Testis (tissue), 5 donors: ENCODE measurements at regions of chrX and their contacts with region 1.

Region 1: GRCh38 chrX:103686199-103687072 is at the start of gene MORF4L2:
- DNase-seq: peak; percentile 94
- H3K4me3 ChIP-seq: peak within 1 kb of the TSS; percentile 63 to 77
- H3K27ac ChIP-seq: peak within 1 kb of the TSS; percentile 97 to 99
- H3K4me1 ChIP-seq: no peaks in the 10 kb centered on the region
- H3K27me3 ChIP-seq: no peaks in the 10 kb centered on the region
- CTCF ChIP-seq: no peak
- POLR2A ChIP-seq: peak; percentile 60
- total RNA-seq, gene MORF4L2: 257 to 267 TPM

Region 2: GRCh38 chrX:103356130-103356798 is 330.2 kb before region 1 on chrX and contains the start of gene TCEAL9:
- intact Hi-C with region 1: loop called (anchors 10 kb)
- DNase-seq: peak; percentile 85
- H3K4me3 ChIP-seq: peak within 1 kb of the TSS; percentile 69 to 82
- H3K27ac ChIP-seq: peak within 1 kb of the TSS; percentile 95 to 97
- H3K4me1 ChIP-seq: no peaks in the 10 kb centered on the region
- H3K27me3 ChIP-seq: no peaks in the 10 kb centered on the region
- CTCF ChIP-seq: no peak
- POLR2A ChIP-seq: peak; percentile 58
- total RNA-seq, gene TCEAL9: 99.4 to 99.7 TPM

Region 3: DNA sequence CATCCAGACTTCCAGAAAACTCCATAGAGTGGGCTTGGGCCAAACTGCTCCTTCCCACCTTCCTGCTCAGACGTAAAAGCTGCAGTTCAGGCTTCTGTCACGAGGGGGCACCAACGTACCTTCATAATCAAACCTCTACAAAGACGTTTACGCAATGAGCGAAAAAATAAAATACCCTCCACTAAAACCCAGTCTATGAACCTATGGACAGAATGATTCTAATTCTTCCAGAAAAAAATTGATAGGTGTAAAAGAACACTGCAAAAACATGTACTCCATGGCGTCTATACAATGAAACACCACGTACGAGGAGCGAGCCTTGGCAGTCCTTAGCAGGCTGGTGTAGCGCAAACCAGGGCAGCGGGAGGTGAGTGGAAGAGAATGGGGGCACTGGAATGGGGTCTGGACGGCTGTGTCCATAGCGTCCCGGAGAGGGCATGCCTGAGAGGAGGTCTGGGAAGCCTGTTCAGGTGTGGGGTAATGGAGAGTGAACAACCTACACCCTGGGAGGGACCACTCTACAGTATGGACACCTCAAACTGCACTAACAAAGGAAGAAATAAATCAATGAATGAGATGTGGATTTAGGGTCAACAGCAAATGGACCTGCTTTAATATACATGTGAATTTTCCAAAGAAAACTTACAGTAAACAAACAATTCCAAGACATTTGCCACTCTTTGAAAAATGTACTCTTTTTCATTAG is 152.8 kb before region 1 on chrX:
- intact Hi-C with region 1: loop called (anchors 10 kb)
- DNase-seq: peak; percentile 93
- H3K4me3 ChIP-seq: no peak overlapping the region
- H3K27ac ChIP-seq: peak overlapping the region; percentile 91 to 92
- H3K4me1 ChIP-seq: peaks cover 14% of the 10 kb centered on the region
- H3K27me3 ChIP-seq: no peaks in the 10 kb centered on the region
- CTCF ChIP-seq: peak; percentile 65 to 78 (median 75)
- POLR2A ChIP-seq: no peak

Region 4: GRCh38 chrX:103554687-103555424 is 131.6 kb before region 1 on chrX:
- intact Hi-C with region 1: no loop called
- DNase-seq: peak; percentile 73
- H3K4me3 ChIP-seq: peak overlapping the region in 1 of 2 donors; percentile 38
- H3K27ac ChIP-seq: no peak overlapping the region
- H3K4me1 ChIP-seq: no peaks in the 10 kb centered on the region
- H3K27me3 ChIP-seq: no peaks in the 10 kb centered on the region
- CTCF ChIP-seq: no peak
- POLR2A ChIP-seq: no peak